HEK293 (cell line): ENCODE measurements at regions of chr5 and their contacts with region 1.

Region 1: DNA sequence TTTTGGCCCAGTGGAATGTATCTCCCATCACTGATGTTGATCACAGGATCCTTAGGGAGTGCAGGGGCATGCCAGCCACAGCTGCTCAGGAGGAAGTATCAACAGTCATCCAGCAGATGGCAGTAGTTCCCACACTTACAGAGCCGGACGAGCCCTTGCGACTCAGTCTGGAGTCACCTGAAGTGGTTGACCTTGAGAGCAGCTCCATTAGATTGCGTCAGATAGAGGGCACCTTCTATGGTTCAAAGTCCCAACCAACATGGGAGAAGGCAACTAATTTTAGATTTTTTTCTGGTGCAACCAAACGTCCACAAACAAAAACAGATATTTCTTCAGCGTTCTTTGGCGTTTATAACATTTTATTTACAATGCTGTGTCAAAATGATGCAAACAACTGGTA is 124.5 kb downstream of the EGFLAM start:
- H3K4me3 ChIP-seq: no peak overlapping the region
- H3K27ac ChIP-seq: no peak overlapping the region
- H3K4me1 ChIP-seq: peaks cover 11% of the 10 kb centered on the region
- CTCF ChIP-seq: peak; percentile 83

Region 2: DNA sequence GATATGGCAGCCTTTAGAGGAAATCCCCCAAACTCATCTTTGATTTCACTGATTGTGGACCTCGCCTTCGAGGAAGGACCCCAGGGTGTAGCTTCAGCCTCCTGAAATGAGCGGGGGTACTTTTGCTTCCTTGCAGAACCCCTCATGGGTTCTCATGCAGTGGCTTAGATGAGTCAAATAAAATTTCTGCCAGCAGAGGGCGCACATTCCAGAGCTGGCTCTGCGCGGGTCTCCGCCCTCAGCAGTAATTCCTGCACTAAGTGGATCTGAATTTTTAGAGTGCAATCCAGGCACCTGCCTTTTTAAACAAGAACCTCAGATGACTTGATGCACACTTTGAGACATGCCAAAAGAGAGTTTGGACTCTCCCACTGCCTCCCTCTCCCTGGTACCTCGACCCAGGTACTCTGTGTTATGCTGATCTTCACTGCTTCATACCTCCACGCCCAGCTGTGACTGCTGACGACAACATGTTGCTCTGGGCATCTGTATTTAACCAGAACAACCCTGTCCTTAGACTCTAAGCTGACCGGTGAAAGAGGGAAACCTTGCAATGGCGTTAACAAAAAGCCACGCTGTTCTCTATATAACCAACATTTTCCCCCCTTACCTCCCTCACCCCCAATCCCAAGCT is 117.2 kb before region 1 on chr5:
- CTCF ChIA-PET with region 1: interaction called, 20 read pairs
- POLR2A ChIA-PET with region 1: no interaction called
- H3K4me3 ChIP-seq: no peak overlapping the region
- H3K27ac ChIP-seq: no peak overlapping the region
- H3K4me1 ChIP-seq: peaks cover 10% of the 10 kb centered on the region; the same call in 1 of the 2 replicates
- CTCF ChIP-seq: peak; percentile 57

Region 3: DNA sequence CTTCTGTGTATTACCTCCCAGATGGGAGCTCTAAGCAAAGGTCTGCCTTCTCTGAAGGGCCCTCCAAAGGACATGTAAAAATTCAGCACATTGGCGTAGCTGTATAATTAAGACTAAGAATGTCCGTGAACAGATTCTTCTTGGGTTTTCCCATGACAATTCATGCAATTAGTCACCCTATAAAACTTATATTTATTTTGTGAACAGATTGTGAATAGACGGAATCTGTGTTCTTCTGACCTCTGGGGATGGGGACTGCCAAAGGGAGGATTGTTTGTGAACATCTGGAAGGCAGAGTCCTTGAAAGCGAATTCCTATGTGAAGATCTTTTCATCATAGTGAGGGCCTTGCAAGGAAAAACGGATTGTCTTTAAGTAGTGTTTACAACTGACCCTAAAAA is 13.2 kb before region 1 on chr5:
- CTCF ChIA-PET with region 1: interaction called, 10 read pairs
- POLR2A ChIA-PET with region 1: no interaction called
- H3K4me3 ChIP-seq: no peak overlapping the region
- H3K27ac ChIP-seq: no peak overlapping the region
- H3K4me1 ChIP-seq: no peaks in the 10 kb centered on the region; the same call in 1 of the 2 replicates
- CTCF ChIP-seq: no peak

Region 4: DNA sequence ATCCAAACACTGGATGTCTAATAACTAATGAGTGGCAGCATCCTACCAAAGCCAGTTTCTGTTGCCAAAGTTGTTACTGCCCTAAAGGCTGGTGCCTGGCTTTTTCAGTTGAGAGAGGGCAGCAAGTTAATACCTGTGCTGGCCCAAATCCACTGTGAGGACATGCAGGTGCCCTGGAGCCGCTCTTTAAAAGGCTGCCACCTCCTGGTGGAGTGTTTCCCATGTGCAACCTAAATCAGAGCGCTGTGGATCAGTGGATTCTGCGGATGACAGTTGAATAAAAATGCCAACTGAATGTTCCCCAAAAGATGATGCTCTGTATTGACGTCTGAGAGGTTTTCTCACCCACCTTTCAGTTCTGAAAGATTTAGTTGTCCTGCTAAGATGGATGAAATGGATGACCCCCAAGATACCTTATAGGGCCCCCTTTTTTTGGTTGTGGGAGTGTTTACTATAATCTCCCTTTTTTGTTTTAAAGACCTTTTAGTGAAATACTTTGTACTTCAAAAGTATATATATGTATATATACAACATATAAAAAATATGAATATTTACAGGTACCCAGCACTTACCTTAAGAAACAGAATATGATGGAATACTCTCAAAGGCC is 21.9 kb after region 1 on chr5:
- CTCF ChIA-PET with region 1: interaction called, 31 read pairs
- POLR2A ChIA-PET with region 1: no interaction called
- H3K4me3 ChIP-seq: no peak overlapping the region
- H3K27ac ChIP-seq: no peak overlapping the region
- H3K4me1 ChIP-seq: no peaks in the 10 kb centered on the region
- CTCF ChIP-seq: 0 out of 2 replicates have a peak, but pooled peaks have one; percentile 10

Region 5: GRCh38 chr5:38420691-38421390 is 37.9 kb after region 1 on chr5:
- CTCF ChIA-PET with region 1: interaction called, 57 read pairs
- POLR2A ChIA-PET with region 1: no interaction called
- H3K4me3 ChIP-seq: no peak overlapping the region
- H3K27ac ChIP-seq: no peak overlapping the region
- H3K4me1 ChIP-seq: peaks cover 14% of the 10 kb centered on the region
- CTCF ChIP-seq: peak; percentile 68